Testis (tissue), 5 donors: ENCODE measurements at regions of chrX and their contacts with region 1.

Region 1: DNA sequence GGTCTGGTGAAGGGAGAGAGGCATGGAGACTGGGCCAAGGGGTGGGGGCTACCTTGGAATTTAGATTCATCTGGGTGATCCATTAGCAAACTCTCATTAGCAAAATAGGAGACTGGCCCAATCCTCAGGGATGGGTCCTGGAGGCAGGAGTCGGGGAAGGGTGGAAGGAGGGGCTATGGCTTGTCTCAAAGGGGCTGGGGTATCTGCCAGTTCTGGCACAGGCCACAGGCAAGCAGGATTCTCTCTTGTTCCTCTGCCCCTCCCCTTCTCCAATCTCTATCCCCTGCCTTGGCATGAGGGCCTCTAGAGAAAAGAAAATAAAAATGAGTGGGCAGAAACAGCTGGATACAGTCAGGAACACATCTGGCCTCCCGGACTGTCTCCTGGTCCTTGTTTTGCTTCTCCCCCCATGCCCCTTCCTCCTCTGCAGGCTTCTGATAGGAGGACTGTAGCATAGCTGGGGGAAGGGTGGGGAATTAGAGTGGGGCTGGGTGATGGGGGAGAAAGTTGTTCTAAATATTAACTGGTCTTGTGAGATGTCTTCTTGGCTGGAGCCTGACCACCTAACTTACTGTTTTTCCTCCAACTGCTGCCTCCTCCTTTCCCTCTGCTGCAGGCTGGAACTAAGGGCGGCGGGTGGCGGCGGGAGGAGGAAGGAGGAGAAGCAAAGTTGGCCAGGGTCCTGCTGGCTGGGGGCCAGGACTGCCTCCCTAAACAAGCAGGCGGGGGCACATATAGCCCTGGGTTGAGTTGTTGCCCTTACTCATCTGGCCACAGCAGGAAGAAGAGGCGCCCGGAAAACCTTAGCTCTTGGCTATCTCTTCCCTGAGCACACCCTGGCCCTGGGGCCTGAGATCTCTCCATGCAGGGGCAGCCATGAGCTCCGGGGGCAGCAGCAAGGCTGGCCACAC is 53.3 kb upstream of the LAS1L start:
- DNase-seq: peak; percentile 77
- H3K4me3 ChIP-seq: peak overlapping the region in 1 of 2 donors; percentile 26
- H3K27ac ChIP-seq: peak overlapping the region; percentile 50 to 68
- H3K4me1 ChIP-seq: no peaks in the 10 kb centered on the region
- H3K27me3 ChIP-seq: no peaks in the 10 kb centered on the region
- CTCF ChIP-seq: no peak
- POLR2A ChIP-seq: no peak

Region 2: DNA sequence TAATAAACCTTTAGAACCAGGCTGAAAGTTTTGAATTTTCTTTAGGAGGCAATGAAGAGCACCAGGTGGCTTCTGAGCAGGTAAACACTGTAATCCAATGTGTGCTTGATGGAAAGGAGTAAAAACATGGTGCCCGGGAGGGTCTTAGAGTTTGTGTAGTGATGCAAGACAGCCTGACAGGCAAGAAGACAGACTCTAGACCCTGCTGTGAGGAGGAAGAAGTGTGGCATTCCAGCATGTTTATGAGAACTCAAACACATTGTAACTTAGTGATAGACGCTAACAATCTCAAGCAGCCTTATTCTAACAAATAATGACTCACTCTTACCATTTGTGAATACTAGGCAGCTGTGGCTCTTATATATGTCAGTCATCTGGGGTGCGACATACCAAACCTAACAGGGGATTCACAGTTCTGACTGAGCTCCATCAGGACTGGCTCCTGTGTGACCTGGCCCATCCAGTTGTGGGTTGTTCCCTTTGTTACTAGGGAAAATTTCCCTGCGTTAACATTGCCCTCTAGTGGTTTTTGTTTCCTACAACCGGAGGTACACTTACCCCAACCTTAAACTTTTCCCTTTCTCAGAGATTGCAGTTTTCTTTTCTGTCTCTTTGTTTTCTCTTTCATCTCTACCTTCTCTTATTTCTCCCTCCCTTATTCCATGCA is 398.2 kb after region 1 on chrX:
- intact Hi-C with region 1: loop called (anchors 5 kb)
- DNase-seq: peak; percentile 13
- H3K4me3 ChIP-seq: no peak overlapping the region
- H3K27ac ChIP-seq: no peak overlapping the region
- H3K4me1 ChIP-seq: no peaks in the 10 kb centered on the region
- H3K27me3 ChIP-seq: no peaks in the 10 kb centered on the region
- CTCF ChIP-seq: peak in 2 of 3 experiments; percentile 33 to 40
- POLR2A ChIP-seq: no peak